ENCODE measurements at regions of chr1 and their contacts with region 1.

Region 1: GRCh38 chr1:224497714-224498573 is 63.3 kb upstream of the WDR26 start:
- DNase-seq: peak; percentile 62
- H3K4me3 Mint-ChIP-seq: peak overlapping the region; percentile 59
- H3K27ac Mint-ChIP-seq: peak overlapping the region; percentile 97
- H3K4me1 Mint-ChIP-seq: peaks cover 63% of the 10 kb centered on the region
- H3K27me3 Mint-ChIP-seq: peaks cover 3% of the 10 kb centered on the region

Region 2: DNA sequence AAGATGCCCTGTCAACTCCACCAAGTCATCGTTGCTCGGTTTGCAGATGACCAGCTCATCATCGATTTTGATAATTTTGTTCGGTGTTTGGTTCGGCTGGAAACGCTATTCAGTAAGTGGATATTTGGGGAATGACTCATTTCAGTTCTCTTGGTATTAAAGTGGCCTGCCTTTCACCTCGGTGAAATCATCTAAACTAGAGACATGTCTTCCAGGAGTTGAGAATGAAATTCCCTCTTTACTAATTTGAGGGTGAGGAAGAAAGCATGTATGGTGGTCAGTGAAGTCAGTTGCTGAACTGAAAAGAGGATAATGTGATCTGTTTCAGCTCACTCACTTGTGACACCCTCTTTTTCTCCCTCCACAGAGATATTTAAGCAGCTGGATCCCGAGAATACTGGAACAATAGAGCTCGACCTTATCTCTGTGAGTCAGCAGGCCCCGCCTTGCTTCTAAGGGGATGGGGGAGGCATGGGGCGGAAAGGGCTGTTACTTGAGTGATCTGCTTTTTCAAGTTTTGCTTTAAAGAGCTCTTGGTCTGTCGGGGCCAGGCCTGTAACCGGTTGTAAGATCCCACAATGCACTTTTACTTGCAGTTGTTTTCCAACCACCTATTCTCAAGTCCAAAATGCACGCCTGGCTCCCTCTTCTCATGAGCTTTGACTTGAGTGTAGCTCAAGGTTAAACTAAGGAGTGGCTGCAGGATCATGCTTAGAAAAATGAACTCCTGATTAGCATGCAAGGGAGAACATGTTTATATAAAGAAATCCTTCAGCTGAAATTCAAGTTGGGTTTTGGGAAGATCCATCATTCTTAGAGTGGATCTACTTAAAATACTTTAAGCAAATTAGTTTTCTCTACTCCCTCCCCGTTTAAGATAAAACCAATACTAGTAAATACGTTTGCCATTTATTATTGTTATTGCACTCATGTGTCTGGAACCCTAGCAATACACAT is 725.9 kb before region 1 on chr1:
- intact Hi-C with region 1: no loop called
- DNase-seq: no peak
- H3K4me3 Mint-ChIP-seq: no peak overlapping the region
- H3K27ac Mint-ChIP-seq: peak overlapping the region; percentile 5
- H3K4me1 Mint-ChIP-seq: peaks cover 17% of the 10 kb centered on the region
- H3K27me3 Mint-ChIP-seq: no peaks in the 10 kb centered on the region

Region 3: GRCh38 chr1:224182866-224183590 is 314.9 kb before region 1 on chr1 and contains the start of gene DEGS1:
- intact Hi-C with region 1: loop called (anchors 5 kb)
- DNase-seq: peak; percentile 80
- H3K4me3 Mint-ChIP-seq: peak within 1 kb of the TSS; percentile 96
- H3K27ac Mint-ChIP-seq: peak within 1 kb of the TSS; percentile 93
- H3K4me1 Mint-ChIP-seq: peaks cover 46% of the 10 kb centered on the region
- H3K27me3 Mint-ChIP-seq: peaks cover 3% of the 10 kb centered on the region
- total RNA-seq, gene DEGS1: 54.7 and 57.1 TPM in 2 replicates

Region 4: GRCh38 chr1:224377676-224378006 is 120.3 kb before region 1 on chr1:
- intact Hi-C with region 1: loop called (anchors 1 kb)
- DNase-seq: no peak
- H3K4me3 Mint-ChIP-seq: peak overlapping the region; percentile 66
- H3K27ac Mint-ChIP-seq: peak overlapping the region; percentile 94
- H3K4me1 Mint-ChIP-seq: peaks cover 91% of the 10 kb centered on the region
- H3K27me3 Mint-ChIP-seq: no peaks in the 10 kb centered on the region

Region 5: GRCh38 chr1:224542783-224543440 is 45.0 kb after region 1 on chr1:
- intact Hi-C with region 1: loop called (anchors 2 kb)
- DNase-seq: peak; percentile 11
- H3K4me3 Mint-ChIP-seq: peak overlapping the region; percentile 23
- H3K27ac Mint-ChIP-seq: no peak overlapping the region
- H3K4me1 Mint-ChIP-seq: peaks cover 29% of the 10 kb centered on the region
- H3K27me3 Mint-ChIP-seq: peaks cover 9% of the 10 kb centered on the region

Region 6: DNA sequence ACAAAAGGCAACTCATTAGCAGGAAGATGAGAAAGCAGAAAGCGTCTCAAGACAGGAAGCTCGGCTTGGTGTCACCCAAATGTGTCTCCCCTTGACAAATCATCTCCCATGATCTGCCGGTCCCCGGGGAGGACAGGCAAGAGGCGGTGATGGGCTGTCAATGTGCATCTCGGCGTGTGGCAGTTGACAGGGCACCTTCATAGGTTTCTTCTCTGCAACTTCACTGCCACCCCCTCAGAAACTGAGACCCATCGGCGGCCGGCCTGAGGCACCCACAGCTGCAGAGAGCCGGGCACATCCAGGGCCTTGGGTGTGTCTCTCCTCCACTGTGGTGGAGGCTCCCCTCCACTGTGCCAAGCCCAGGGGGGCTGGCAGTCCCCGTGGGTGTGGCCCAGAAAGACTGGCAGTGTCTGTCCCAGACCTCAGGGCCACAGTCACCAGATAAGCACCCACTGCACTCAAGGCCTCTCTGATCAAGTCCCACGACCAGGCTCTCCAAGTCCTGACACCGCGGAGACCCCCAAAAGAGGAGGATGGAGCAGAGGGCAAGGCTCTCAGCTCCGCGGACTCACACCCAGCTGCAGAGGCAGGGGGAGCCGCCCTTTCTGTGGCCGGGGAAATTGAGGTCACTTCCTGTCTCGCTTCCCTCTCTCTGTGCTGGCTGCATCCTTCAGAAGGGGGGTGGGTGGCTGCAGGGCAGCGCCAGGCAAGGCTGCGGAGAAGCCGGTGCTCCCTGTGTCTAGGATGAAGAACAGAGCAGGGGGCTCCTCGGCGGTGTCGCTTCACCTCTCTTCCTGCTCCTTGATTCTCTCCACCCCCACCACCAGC is 969.5 kb after region 1 on chr1:
- intact Hi-C with region 1: loop called (anchors 10 kb)
- DNase-seq: peak; percentile 80
- H3K4me3 Mint-ChIP-seq: peak overlapping the region; percentile 92
- H3K27ac Mint-ChIP-seq: peak overlapping the region; percentile 95
- H3K4me1 Mint-ChIP-seq: peaks cover 45% of the 10 kb centered on the region
- H3K27me3 Mint-ChIP-seq: no peaks in the 10 kb centered on the region

Measured in activated T-helper 1 cell treated with anti-CD3 and anti-CD28 coated beads, Interleukin-12 subunit alpha, Interleukin-12 subunit beta, Interleukin-2, Interleukin-4 antibody, amounts not matched to agents 30 ng/mL and 10 ng/mL and 1 ng/mL, durations not matched to agents 14 hours and 24 hours and 36 hours (primary cell).